CD8-positive, alpha-beta T cell (primary cell): ENCODE measurements at regions of chr22 and their contacts with region 1.

Region 1: DNA sequence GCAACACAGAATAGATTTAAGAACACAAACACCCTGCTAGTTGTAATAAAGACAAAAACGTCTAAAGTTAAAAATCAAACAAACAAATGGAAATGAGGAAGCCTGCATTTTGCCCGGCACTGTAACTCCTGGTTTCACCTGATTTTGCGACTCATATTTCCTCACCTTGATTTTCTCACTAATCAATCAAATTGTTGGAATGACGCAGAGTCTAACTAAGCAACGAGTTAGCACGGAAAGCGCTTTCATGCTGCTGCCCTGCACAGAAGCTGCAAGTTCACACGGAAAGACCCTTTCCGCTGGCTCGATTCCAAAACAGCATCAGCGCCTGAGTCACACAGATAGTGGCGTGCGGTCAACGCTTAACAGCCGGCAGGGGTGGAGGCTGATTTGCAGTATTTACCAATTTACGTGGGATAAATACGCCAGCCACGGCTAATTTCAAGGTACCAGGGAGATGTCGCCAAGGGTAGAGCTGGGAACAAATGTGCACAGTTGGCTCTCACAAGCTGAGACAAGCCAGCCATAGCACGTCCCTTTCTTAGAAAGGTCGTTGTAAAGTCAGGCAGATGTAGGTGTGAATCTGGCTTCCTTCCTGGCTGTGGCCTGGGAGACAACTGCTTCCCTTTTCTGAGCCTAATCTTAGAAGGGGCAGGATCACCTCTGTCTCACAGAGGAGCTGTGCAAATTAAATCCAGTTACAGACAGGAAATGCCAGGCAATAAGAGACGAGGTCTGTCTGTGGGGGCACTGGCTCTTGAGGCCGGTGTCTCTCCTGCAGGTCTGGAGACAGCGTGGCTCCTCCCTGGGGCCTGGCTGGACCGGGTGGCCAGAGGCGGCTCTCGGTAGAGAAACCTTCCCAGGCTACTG is 76.9 kb upstream of the TTLL12 start:
- DNase-seq: peak; percentile 62 to 98 (median 85)
- ATAC-seq: peak; percentile 82
- H3K4me3 ChIP-seq: peak overlapping the region; percentile 23 to 25
- H3K4me3 Mint-ChIP-seq: peak overlapping the region; percentile 71
- H3K27ac ChIP-seq: peak overlapping the region; percentile 49 to 84
- H3K27ac Mint-ChIP-seq: peak overlapping the region; percentile 79
- H3K4me1 ChIP-seq: peaks cover 29% of the 10 kb centered on the region
- H3K4me1 Mint-ChIP-seq: peaks cover 26% of the 10 kb centered on the region
- H3K27me3 ChIP-seq: no peaks in the 10 kb centered on the region
- H3K27me3 Mint-ChIP-seq: no peaks in the 10 kb centered on the region
- CTCF ChIP-seq: no peak

Region 2: DNA sequence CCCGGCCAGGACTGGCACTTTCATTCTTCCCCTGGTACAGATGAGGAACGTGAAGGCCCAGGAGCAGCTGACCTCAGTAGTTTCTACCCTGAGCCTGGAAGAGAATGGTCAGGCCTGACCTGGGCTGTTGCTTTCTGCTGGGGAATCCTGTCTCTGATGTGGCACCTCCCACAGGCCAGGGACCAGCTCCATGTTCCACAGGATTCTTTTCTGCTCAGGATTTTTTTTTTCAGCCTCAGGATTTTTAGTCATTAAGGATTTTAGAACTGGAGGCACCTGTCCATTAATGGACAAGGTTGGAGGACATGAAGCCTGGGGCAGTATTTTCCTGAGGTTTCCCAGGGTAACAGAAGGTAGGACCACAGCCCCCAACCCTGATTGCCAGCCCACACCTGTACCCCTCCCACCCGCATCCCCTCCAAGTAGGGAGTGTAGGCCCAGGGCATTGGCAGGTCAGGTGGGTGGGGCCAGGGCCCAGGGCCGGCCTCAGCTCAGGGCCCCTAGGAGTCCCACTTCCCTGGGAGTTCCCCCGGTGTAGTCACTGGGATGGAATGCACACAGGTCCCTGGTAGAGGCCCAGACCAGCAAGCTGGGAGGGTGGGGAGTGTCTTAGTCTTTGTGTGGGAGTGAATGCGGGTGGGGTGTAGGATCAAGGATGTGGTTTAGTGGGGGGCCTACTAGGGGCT is 137.3 kb before region 1 on chr22:
- CTCF ChIA-PET with region 1: no interaction called
- POLR2A ChIA-PET with region 1: no interaction called
- intact Hi-C with region 1: no loop called
- DNase-seq: no peak
- ATAC-seq: no peak
- H3K4me3 ChIP-seq: no peak overlapping the region
- H3K4me3 Mint-ChIP-seq: no peak overlapping the region
- H3K27ac ChIP-seq: no peak overlapping the region
- H3K27ac Mint-ChIP-seq: no peak overlapping the region
- H3K4me1 ChIP-seq: no peaks in the 10 kb centered on the region
- H3K4me1 Mint-ChIP-seq: peaks cover 8% of the 10 kb centered on the region
- H3K27me3 ChIP-seq: no peaks in the 10 kb centered on the region
- H3K27me3 Mint-ChIP-seq: no peaks in the 10 kb centered on the region
- CTCF ChIP-seq: no peak

Region 3: GRCh38 chr22:43222262-43222661 is 41.6 kb before region 1 on chr22:
- CTCF ChIA-PET with region 1: no interaction called
- POLR2A ChIA-PET with region 1: interaction called, 3 read pairs
- intact Hi-C with region 1: loop called in 1 of 2 experiments (anchors 2 kb)
- DNase-seq: no peak
- ATAC-seq: no peak
- H3K4me3 ChIP-seq: no peak overlapping the region
- H3K4me3 Mint-ChIP-seq: no peak overlapping the region
- H3K27ac ChIP-seq: no peak overlapping the region
- H3K27ac Mint-ChIP-seq: no peak overlapping the region
- H3K4me1 ChIP-seq: no peaks in the 10 kb centered on the region
- H3K4me1 Mint-ChIP-seq: peaks cover 2% of the 10 kb centered on the region
- H3K27me3 ChIP-seq: no peaks in the 10 kb centered on the region
- H3K27me3 Mint-ChIP-seq: no peaks in the 10 kb centered on the region
- CTCF ChIP-seq: no peak